ENCODE measurements at regions of chr3 and their contacts with region 1.

Region 1: GRCh38 chr3:17412950-17413530 is 329.4 kb downstream of the TBC1D5 start:
- DNase-seq: no peak
- ATAC-seq: peak; percentile 76
- H3K4me3 Mint-ChIP-seq: no peak overlapping the region
- H3K27ac Mint-ChIP-seq: no peak overlapping the region
- H3K4me1 Mint-ChIP-seq: no peaks in the 10 kb centered on the region
- H3K27me3 Mint-ChIP-seq: no peaks in the 10 kb centered on the region
- CTCF ChIP-seq: peak; percentile 69

Region 2: GRCh38 chr3:17258823-17259436 is 154.1 kb before region 1 on chr3:
- CTCF ChIA-PET with region 1: interaction called, 22 read pairs
- POLR2A ChIA-PET with region 1: no interaction called
- intact Hi-C with region 1: loop called (anchors 1 kb)
- DNase-seq: no peak
- ATAC-seq: no peak
- H3K4me3 Mint-ChIP-seq: no peak overlapping the region
- H3K27ac Mint-ChIP-seq: no peak overlapping the region
- H3K4me1 Mint-ChIP-seq: no peaks in the 10 kb centered on the region
- H3K27me3 Mint-ChIP-seq: no peaks in the 10 kb centered on the region
- CTCF ChIP-seq: peak; percentile 73

Region 3: GRCh38 chr3:17562845-17563244 is 149.8 kb after region 1 on chr3:
- CTCF ChIA-PET with region 1: no interaction called
- POLR2A ChIA-PET with region 1: no interaction called
- intact Hi-C with region 1: no loop called
- DNase-seq: no peak
- ATAC-seq: no peak
- H3K4me3 Mint-ChIP-seq: no peak overlapping the region
- H3K27ac Mint-ChIP-seq: no peak overlapping the region
- H3K4me1 Mint-ChIP-seq: peaks cover 6% of the 10 kb centered on the region
- H3K27me3 Mint-ChIP-seq: no peaks in the 10 kb centered on the region
- CTCF ChIP-seq: no peak

Measured in activated B cell treated with CpG ODN at 0.5 μM for 24 hours (primary cell).